K562 (cell line): ENCODE measurements at regions of chr6 and their contacts with region 1.

Region 1: GRCh38 chr6:151014404-151015100 is 149.1 kb downstream of the MTHFD1L start:
- DNase-seq: peak; percentile 61 to 80 (median 72)
- ATAC-seq: peak; percentile 86
- H3K4me3 ChIP-seq: no peak overlapping the region
- H3K27ac ChIP-seq: no peak overlapping the region
- H3K4me1 ChIP-seq: no peaks in the 10 kb centered on the region
- H3K27me3 ChIP-seq: no peaks in the 10 kb centered on the region
- CTCF ChIP-seq: peak; percentile 86 to 96 (median 96)
- EP300 ChIP-seq: 0 out of 2 replicates have a peak, but pooled peaks have one; percentile 10
- POLR2A ChIP-seq: no peak
- RAD21 ChIP-seq: peak; percentile 94 to 96

Region 2: GRCh38 chr6:150517175-150517574 is 497.4 kb before region 1 on chr6:
- CTCF ChIA-PET with region 1: no interaction called
- POLR2A ChIA-PET with region 1: no interaction called
- in situ Hi-C with region 1: no loop called
- intact Hi-C with region 1: no loop called
- DNase-seq: peak in 1 of 4 experiments; percentile 6
- ATAC-seq: peak; percentile 29; the same call in 1 of the 3 replicates
- H3K4me3 ChIP-seq: no peak overlapping the region
- H3K27ac ChIP-seq: no peak overlapping the region
- H3K4me1 ChIP-seq: no peaks in the 10 kb centered on the region
- H3K27me3 ChIP-seq: peaks cover 0 to 4% of the 10 kb centered on the region in 2 experiments; a peak in 1 of 5 replicates
- CTCF ChIP-seq: no peak
- EP300 ChIP-seq: no peak
- POLR2A ChIP-seq: no peak
- RAD21 ChIP-seq: no peak

Region 3: GRCh38 chr6:151044465-151045441 is 30.2 kb after region 1 on chr6:
- CTCF ChIA-PET with region 1: interaction called, 3 read pairs
- POLR2A ChIA-PET with region 1: no interaction called
- in situ Hi-C with region 1: no loop called
- intact Hi-C with region 1: loop called (anchors 2 kb)
- DNase-seq: no peak
- ATAC-seq: no peak
- H3K4me3 ChIP-seq: no peak overlapping the region
- H3K27ac ChIP-seq: no peak overlapping the region
- H3K4me1 ChIP-seq: peaks cover 12 to 25% of the 10 kb centered on the region in 2 experiments; a peak in 4 of 5 replicates
- H3K27me3 ChIP-seq: no peaks in the 10 kb centered on the region
- CTCF ChIP-seq: no peak
- EP300 ChIP-seq: no peak
- POLR2A ChIP-seq: no peak
- RAD21 ChIP-seq: no peak

Region 4: DNA sequence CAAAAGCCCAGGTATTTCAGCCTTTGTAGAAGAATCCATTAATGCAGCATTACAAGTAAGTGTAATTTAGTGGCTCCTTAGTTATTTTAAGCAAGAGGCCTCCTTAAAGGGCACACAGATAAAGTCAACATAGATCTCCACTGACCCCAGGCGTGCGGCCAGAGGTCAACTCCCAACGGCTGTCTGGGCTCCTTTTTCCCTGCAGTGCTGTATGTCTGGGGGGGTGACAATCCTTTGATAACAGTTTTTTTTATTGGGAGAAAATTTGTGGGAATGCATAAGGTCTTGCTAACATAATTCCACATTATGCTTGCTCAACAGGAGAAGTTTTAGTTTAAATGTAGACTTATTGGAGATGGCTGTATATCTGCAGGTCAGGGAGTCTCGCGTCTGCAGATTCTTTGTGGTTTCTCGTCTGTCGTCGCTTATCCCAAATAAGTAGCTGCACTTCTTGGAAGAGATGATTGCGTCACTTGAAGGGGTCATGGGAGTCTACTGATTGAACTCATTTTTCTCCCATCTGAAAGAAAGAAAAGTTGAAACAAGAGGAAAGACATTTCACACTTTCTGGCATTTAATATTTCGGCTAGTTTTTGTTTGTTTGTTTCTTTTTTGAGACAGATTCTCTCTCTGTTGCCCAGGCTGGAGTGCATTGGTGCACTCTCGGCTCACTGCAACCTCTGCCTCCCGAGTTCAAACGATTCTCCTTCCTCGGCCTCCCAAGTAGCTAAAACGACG is 73.5 kb after region 1 on chr6:
- CTCF ChIA-PET with region 1: interaction called, 3 read pairs
- POLR2A ChIA-PET with region 1: no interaction called
- in situ Hi-C with region 1: no loop called
- intact Hi-C with region 1: loop called (anchors 1 kb)
- DNase-seq: peak; percentile 49 to 88 (median 66)
- ATAC-seq: peak; percentile 97
- H3K4me3 ChIP-seq: no peak overlapping the region
- H3K27ac ChIP-seq: peak overlapping the region; percentile 0; the same call in 1 of the 3 replicates
- H3K4me1 ChIP-seq: peaks cover 10 to 12% of the 10 kb centered on the region in 2 experiments; a peak in 3 of 5 replicates
- H3K27me3 ChIP-seq: no peaks in the 10 kb centered on the region
- CTCF ChIP-seq: peak; percentile 23 to 47 (median 44); a peak in 2 of 6 replicates
- EP300 ChIP-seq: peak; percentile 78
- POLR2A ChIP-seq: no peak
- RAD21 ChIP-seq: peak; percentile 46 to 63

Region 5: DNA sequence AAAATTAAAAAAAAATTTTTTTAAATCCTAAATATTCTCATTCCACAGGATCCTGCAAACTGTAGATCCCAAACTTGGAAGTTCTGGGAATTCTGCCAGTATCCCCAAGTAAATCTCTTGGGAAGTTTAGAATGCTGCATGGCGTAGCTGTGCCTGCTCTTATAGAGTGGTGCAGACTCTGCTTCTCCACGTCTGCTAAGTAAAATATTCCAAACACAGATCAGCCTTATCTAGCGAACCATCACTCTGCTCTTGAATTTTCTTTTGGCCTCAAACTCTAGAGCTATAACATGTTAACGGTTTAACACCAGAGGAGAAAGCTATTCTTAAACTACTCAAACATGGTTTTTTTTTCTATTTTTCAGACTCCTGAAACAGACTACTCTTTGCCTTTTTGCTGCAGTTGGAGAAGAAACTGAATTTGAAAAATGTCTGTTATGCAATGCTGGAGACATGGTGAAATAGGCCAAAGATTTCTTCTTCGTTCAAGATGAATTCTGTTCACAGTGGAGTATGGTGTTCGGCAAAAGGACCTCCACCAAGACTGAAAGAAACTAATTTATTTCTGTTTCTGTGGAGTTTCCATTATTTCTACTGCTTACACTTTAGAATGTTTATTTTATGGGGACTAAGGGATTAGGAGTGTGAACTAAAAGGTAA is 86.7 kb after region 1 on chr6:
- CTCF ChIA-PET with region 1: no interaction called
- POLR2A ChIA-PET with region 1: no interaction called
- in situ Hi-C with region 1: no loop called
- intact Hi-C with region 1: loop called (anchors 5 kb)
- DNase-seq: no peak
- ATAC-seq: no peak
- H3K4me3 ChIP-seq: no peak overlapping the region
- H3K27ac ChIP-seq: no peak overlapping the region
- H3K4me1 ChIP-seq: peaks cover 0 to 4% of the 10 kb centered on the region in 2 experiments; a peak in 3 of 5 replicates
- H3K27me3 ChIP-seq: no peaks in the 10 kb centered on the region
- CTCF ChIP-seq: no peak
- EP300 ChIP-seq: no peak
- POLR2A ChIP-seq: no peak
- RAD21 ChIP-seq: no peak

Region 6: DNA sequence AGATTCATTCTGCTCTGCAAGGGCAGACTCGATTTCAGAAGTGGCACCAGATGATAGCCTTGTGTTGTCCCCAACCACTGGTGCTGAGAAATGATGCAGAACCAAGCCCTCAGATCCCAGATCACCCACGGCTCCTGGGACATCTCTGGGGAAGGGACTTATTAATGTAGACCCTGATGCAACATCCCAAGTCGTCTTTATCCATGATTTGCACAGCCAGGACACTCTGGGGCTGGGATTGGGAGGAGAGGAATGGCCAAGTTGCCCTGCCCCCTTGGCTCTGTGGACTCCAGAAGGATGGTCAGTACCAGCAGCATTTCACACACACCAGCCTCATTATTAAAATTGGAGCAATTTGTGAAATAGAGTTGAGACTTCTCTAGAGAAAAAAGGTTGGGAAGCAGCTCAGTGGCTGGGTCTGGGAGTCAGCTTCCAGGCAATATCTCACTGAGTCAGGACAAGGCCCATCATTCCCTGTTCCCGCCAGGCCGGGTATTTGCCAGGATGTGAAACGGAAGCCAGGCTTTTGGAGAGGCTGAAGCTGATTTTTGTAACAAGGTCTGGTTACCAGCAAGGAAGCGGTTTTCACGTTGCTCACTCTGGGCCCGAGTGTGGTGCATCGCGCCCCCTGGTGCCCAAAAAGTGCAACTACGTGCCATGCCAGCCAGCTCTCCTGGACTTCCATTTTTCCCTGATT is 309.4 kb after region 1 on chr6:
- CTCF ChIA-PET with region 1: interaction called, 40 read pairs
- POLR2A ChIA-PET with region 1: interaction called, 5 read pairs
- in situ Hi-C with region 1: no loop called
- intact Hi-C with region 1: loop called (anchors 1 kb)
- DNase-seq: peak; percentile 73 to 85 (median 82)
- ATAC-seq: peak; percentile 95
- H3K4me3 ChIP-seq: no peak overlapping the region
- H3K27ac ChIP-seq: no peak overlapping the region
- H3K4me1 ChIP-seq: peaks cover 0 to 6% of the 10 kb centered on the region in 2 experiments; a peak in 2 of 5 replicates
- H3K27me3 ChIP-seq: peaks cover 37 to 51% of the 10 kb centered on the region in 2 experiments
- CTCF ChIP-seq: peak; percentile 91 to 98 (median 96)
- EP300 ChIP-seq: no peak
- POLR2A ChIP-seq: no peak
- RAD21 ChIP-seq: peak; percentile 94 to 98

Region 7: GRCh38 chr6:151330134-151330696 is 315.7 kb after region 1 on chr6:
- CTCF ChIA-PET with region 1: interaction called, 40 read pairs
- POLR2A ChIA-PET with region 1: no interaction called
- in situ Hi-C with region 1: loop called (anchors 5 kb)
- intact Hi-C with region 1: no loop called
- DNase-seq: no peak
- ATAC-seq: no peak
- H3K4me3 ChIP-seq: no peak overlapping the region
- H3K27ac ChIP-seq: no peak overlapping the region
- H3K4me1 ChIP-seq: peaks cover 0 to 9% of the 10 kb centered on the region in 2 experiments; a peak in 1 of 5 replicates
- H3K27me3 ChIP-seq: peaks cover 49 to 51% of the 10 kb centered on the region in 2 experiments
- CTCF ChIP-seq: no peak
- EP300 ChIP-seq: no peak
- POLR2A ChIP-seq: no peak
- RAD21 ChIP-seq: no peak